ENCODE measurements at regions of chr5 and their contacts with region 1.

Region 1: DNA sequence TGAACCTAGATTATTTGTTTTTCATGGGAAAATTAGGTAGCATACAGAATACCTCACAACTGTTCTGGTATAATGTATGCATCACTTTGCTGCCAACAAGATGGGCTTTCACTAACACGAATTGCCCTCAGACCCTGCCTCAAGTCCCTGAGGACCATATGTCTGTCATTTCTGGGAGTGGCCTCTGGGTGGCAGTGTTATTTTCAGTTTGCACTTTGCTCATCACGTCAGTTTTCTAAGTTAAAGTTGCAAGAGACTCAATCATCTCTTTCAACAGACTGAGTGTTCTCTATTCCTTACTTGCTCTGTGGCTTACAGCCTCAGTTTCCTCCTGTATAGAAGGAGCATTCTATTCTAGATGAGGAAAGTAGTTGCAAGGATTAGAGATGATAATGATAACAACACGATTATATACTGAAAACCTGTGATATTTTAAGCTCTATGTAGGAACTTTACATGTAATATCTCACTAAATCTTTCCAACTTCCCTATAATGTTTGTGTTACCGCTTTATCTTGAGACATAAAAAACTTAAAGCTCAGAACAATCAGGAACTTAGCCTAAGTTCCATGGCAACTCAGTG is 55.7 kb downstream of the TSSK1B start:
- DNase-seq: peak; percentile 17 to 18
- ATAC-seq: peak in 1 of 2 donors; percentile 62
- H3K4me3 ChIP-seq: no peak overlapping the region
- H3K27ac ChIP-seq: no peak overlapping the region
- H3K4me1 ChIP-seq: no peaks in the 10 kb centered on the region
- H3K27me3 ChIP-seq: no peaks in the 10 kb centered on the region
- CTCF ChIP-seq: peak in 4 of 5 experiments; percentile 44 to 68 (median 55)
- POLR2A ChIP-seq: no peak

Region 2: DNA sequence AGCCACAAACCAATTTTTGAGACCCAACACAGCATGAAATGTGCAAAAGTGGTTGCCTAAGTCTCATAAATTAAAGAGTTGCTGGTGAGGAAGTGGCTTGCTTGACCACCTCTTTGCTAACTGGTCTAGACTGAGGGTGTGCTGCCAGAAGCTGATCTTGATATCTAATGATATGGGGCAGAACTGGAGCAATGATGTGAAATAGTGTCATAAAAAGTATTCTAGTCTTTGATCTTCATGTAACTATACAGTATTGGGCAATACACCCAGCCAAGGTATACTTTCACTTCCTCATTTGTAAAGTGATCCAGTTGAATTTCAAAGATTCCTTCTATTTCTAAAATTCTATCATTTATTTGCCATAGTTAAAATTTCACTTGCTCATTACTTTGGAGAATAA is 128.6 kb after region 1 on chr5:
- in situ Hi-C with region 1: loop called in 1 of 4 experiments (anchors 10 kb)
- intact Hi-C with region 1: loop called (anchors 2 kb)
- DNase-seq: no peak
- ATAC-seq: no peak
- H3K4me3 ChIP-seq: no peak overlapping the region
- H3K27ac ChIP-seq: no peak overlapping the region
- H3K4me1 ChIP-seq: no peaks in the 10 kb centered on the region
- H3K27me3 ChIP-seq: no peaks in the 10 kb centered on the region
- CTCF ChIP-seq: no peak
- POLR2A ChIP-seq: no peak

Region 3: GRCh38 chr5:114120166-114120565 is 741.1 kb after region 1 on chr5:
- in situ Hi-C with region 1: no loop called
- intact Hi-C with region 1: no loop called
- DNase-seq: no peak
- ATAC-seq: no peak
- H3K4me3 ChIP-seq: no peak overlapping the region
- H3K27ac ChIP-seq: no peak overlapping the region
- H3K4me1 ChIP-seq: peaks cover 0 to 2% of the 10 kb centered on the region in 2 donors
- H3K27me3 ChIP-seq: no peaks in the 10 kb centered on the region
- CTCF ChIP-seq: no peak
- POLR2A ChIP-seq: no peak